ENCODE measurements at regions of chr19 and their contacts with region 1.

Region 1: DNA sequence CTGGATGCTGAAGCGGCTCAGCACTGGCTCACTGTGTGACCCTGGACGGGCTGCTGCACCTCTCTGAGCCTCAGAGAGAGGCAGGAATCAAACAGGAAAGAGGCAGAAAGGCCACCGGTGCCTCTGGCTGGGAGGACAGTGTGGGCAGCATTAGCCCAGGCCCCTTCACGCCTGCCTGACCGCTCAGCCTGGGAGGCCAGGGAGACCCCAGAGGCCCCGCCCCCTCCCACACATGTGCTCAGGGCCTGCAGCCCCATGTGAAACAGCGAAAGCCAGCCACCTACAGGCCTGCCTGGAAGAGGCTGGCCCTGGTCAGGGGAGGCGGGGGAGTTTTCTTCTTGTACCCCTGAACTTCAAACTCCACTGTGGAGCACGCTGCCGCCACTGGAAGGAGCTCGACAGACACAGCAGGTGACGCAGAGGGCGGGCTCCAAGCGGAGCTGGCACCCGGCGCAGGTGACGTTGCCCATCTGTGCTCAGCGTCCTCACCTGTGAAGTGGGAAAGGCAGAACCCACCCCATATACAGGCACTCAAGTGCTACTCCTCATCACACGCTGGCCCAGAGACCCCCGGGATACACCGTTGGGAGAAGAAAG is 39.7 kb downstream of the MLLT1 start:
- DNase-seq: no peak

Region 2: DNA sequence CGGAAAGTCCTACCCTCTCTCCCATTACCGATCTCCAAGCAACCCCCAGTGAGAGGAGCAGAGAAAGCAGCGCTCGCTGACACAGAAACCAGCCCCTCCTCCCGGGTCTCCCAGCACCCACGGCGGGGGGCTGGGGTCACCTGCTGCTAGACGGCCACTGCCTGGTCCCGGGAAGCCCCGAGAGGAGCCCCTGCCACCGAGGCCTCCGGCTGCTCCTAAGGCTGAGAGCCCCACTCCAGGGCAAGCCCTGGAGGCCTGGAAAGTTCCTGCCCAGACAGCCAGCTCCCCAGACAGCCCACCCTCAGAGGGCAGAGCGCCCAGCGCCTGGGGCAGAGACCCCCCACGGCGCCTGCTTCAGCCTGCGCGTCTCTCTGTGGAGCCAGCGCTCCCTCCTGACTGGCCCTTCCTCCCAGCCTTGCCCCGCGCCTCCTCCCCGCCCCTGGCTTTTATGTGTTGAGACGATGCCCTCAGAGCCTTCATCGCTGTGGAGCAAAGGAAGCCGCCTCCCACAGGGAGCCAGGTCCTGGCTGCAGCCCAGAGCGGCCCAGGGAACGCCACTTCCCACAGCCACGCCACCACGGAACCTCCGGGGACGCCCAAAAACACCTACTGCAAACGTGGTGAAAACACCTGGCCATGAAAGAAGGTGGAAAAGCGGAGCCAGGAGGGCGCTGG is 11.4 kb before region 1 on chr19:
- intact Hi-C with region 1: loop called in 1 of 2 experiments (anchors 1 kb)
- DNase-seq: no peak

Measured in posterior vena cava (tissue), 2 donors.